Heart left ventricle (tissue), 16 donors: ENCODE measurements at regions of chr10 and their contacts with region 1.

Region 1: GRCh38 chr10:45249978-45250693 is 65.3 kb downstream of the OR13A1 start:
- DNase-seq: peak in 1 of 5 donors; percentile 30
- ATAC-seq: peak in 2 of 4 donors; percentile 49 to 73
- H3K4me3 ChIP-seq: peak overlapping the region in 8 of 12 donors; percentile 11 to 47 (median 29)
- H3K27ac ChIP-seq: no peak overlapping the region
- H3K4me1 ChIP-seq: peaks cover 0 to 11% (median 0%) of the 10 kb centered on the region in 12 donors
- H3K27me3 ChIP-seq: peaks cover 0 to 8% (median 0%) of the 10 kb centered on the region in 9 donors
- CTCF ChIP-seq: peak; percentile 54 to 75 (median 68)
- POLR2A ChIP-seq: no peak

Region 2: GRCh38 chr10:45420453-45421192 is 170.5 kb after region 1 on chr10:
- intact Hi-C with region 1: loop called in 1 of 10 experiments (anchors 2 kb)
- DNase-seq: peak; percentile 78 to 91 (median 87)
- ATAC-seq: peak; percentile 11 to 61 (median 47)
- H3K4me3 ChIP-seq: peak overlapping the region in 6 of 12 donors; percentile 59 to 77 (median 72)
- H3K27ac ChIP-seq: peak overlapping the region; percentile 77 to 99 (median 92)
- H3K4me1 ChIP-seq: peaks cover 5 to 72% (median 24%) of the 10 kb centered on the region in 12 donors
- H3K27me3 ChIP-seq: no peaks in the 10 kb centered on the region
- CTCF ChIP-seq: no peak
- POLR2A ChIP-seq: no peak

Region 3: GRCh38 chr10:45453639-45454255 is 203.6 kb after region 1 on chr10:
- intact Hi-C with region 1: loop called in 2 of 10 experiments (anchors 10 kb)
- DNase-seq: no peak
- ATAC-seq: peak; percentile 14 to 38 (median 22)
- H3K4me3 ChIP-seq: no peak overlapping the region
- H3K27ac ChIP-seq: peak overlapping the region in 9 of 12 donors; percentile 41 to 70 (median 54)
- H3K4me1 ChIP-seq: peaks cover 0 to 28% (median 17%) of the 10 kb centered on the region in 12 donors
- H3K27me3 ChIP-seq: no peaks in the 10 kb centered on the region
- CTCF ChIP-seq: no peak
- POLR2A ChIP-seq: no peak